ENCODE measurements at regions of chr3 and their contacts with region 1.

Region 1: DNA sequence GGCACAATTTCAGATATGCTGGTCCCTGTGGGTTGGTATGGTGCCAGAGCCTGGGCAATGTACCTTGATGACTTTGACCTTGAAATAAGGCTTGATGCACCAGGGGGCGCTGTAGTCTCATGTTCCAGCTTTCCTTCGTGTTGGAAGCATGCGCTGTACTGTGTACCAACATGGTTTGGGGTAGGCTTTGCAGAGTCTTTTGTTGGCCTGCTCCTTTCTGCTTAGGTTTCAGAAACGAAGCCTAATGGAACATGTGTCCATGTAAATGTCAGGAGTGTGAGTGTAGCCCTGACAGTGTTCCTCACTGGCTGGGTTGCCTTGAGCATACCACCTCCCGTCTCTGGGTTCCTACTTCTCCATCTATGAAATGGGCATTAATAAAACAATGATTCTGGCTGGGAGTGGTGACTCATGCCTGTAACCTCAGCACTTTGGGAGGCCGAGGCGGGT is 3.6 kb upstream of the CCR4 start:
- DNase-seq: peak; percentile 99
- H3K4me3 Mint-ChIP-seq: no peak overlapping the region
- H3K27ac Mint-ChIP-seq: no peak overlapping the region
- H3K4me1 Mint-ChIP-seq: peaks cover 38% of the 10 kb centered on the region
- H3K27me3 Mint-ChIP-seq: no peaks in the 10 kb centered on the region

Region 2: DNA sequence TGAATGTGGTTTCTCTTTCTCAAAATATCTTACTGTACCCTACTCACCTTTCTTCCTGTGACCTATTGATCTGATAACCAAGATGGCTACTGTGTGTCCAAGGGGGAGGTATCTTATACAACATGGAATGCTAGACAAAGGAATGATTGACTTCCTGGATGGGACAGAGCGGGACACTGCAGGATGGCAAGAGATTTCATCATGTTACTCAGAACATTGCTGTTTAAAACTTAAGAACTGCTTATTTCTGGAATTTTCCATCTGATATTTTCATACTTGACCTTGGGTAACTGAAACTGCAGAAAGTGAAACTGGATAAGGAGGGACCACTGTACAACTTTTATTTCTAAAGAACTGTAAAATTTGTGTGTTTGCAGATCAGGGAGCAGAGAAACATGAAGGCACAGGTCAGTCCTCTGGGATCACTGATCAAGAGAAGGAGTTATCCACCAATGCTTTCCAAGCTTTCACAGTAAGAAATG is 244.3 kb before region 1 on chr3:
- CTCF ChIA-PET with region 1: no interaction called
- intact Hi-C with region 1: no loop called
- DNase-seq: no peak
- H3K4me3 Mint-ChIP-seq: no peak overlapping the region
- H3K27ac Mint-ChIP-seq: no peak overlapping the region
- H3K4me1 Mint-ChIP-seq: peaks cover 27% of the 10 kb centered on the region
- H3K27me3 Mint-ChIP-seq: no peaks in the 10 kb centered on the region

Region 3: GRCh38 chr3:32960404-32961170 is 12.8 kb after region 1 on chr3:
- CTCF ChIA-PET with region 1: interaction called, 6 read pairs
- intact Hi-C with region 1: loop called (anchors 1 kb)
- DNase-seq: no peak
- H3K4me3 Mint-ChIP-seq: no peak overlapping the region
- H3K27ac Mint-ChIP-seq: peak overlapping the region; percentile 75
- H3K4me1 Mint-ChIP-seq: peaks cover 61% of the 10 kb centered on the region
- H3K27me3 Mint-ChIP-seq: no peaks in the 10 kb centered on the region

Region 4: GRCh38 chr3:33016851-33017405 is 69.1 kb after region 1 on chr3:
- CTCF ChIA-PET with region 1: interaction called, 10 read pairs
- intact Hi-C with region 1: no loop called
- DNase-seq: no peak
- H3K4me3 Mint-ChIP-seq: no peak overlapping the region
- H3K27ac Mint-ChIP-seq: no peak overlapping the region
- H3K4me1 Mint-ChIP-seq: peaks cover 20% of the 10 kb centered on the region
- H3K27me3 Mint-ChIP-seq: no peaks in the 10 kb centered on the region

Region 5: GRCh38 chr3:33047842-33048834 is 100.3 kb after region 1 on chr3:
- CTCF ChIA-PET with region 1: interaction called, 3 read pairs
- intact Hi-C with region 1: loop called (anchors 1 kb)
- DNase-seq: peak; percentile 78
- H3K4me3 Mint-ChIP-seq: no peak overlapping the region
- H3K27ac Mint-ChIP-seq: peak overlapping the region; percentile 89
- H3K4me1 Mint-ChIP-seq: peaks cover 62% of the 10 kb centered on the region
- H3K27me3 Mint-ChIP-seq: no peaks in the 10 kb centered on the region

Region 6: DNA sequence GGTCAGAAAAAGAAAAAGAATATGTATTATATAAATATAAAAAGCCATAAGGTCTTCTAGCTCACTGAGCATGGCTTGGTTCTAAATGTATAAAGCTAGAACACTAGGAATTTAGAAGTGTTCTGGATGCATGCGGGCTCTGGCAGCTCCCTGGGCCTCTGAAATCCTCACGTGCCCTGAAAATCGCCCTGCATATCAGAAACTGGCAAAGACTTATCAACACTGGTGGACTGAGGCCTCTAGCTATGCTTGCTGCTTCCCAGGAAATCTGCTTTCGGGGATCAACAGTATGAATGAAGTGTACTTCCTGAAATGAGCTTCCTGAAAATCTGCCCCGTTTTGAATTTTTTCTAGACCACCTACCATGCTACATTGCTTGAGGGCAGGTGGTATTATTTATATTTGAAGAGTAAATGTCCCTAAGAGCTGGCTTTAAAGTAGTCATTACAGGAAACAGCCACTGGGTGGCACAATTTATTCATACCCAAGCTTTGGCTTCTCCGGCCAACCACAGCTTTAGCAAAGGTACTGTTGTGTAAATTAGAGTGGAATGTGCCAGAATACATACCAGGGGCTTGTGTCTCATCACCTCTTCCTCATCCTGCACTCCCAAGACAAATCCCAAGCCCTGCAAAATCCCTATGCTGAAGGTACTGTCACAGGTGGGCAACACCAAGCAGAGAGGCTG is 183.7 kb after region 1 on chr3:
- CTCF ChIA-PET with region 1: interaction called, 19 read pairs
- intact Hi-C with region 1: loop called (anchors 5 kb)
- DNase-seq: peak; percentile 50
- H3K4me3 Mint-ChIP-seq: no peak overlapping the region
- H3K27ac Mint-ChIP-seq: no peak overlapping the region
- H3K4me1 Mint-ChIP-seq: peaks cover 4% of the 10 kb centered on the region
- H3K27me3 Mint-ChIP-seq: no peaks in the 10 kb centered on the region

Region 7: DNA sequence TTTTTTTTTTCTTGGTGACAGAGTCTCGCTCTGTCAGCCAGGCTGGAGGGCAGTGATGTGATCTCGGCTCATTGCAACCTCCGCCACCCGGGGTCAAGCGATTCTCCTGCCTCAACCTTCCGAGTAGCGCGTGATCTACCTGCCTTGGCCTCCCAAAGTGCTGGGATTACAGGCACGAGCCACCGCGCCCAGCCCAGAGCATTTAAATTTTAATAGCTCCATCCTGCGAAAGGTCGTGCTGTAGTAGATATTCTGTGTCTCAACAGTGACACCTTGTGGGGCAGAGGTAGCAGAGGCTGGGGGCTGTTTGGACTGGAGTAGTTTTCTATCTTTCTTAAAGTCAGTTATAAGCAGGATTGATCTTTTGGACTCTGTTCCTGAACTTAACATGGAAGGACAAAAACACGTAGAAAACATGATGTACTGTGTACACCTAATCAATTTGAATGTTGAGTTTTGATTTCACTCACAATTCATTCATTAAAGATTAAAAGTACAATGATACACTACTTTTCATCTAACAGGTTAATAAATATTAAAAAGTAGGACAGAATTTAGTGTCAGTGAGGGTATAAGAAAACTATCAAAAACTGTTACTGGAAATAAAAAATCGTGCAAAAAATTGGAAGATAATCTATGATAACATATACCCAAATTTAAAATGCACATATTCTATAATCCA is 839.7 kb after region 1 on chr3:
- CTCF ChIA-PET with region 1: interaction called, 7 read pairs
- intact Hi-C with region 1: loop called (anchors 1 kb)
- DNase-seq: peak; percentile 74
- H3K4me3 Mint-ChIP-seq: peak overlapping the region; percentile 48
- H3K27ac Mint-ChIP-seq: no peak overlapping the region
- H3K4me1 Mint-ChIP-seq: peaks cover 9% of the 10 kb centered on the region
- H3K27me3 Mint-ChIP-seq: no peaks in the 10 kb centered on the region